ENCODE measurements at regions of chr7 and their contacts with region 1.

Region 1: GRCh38 chr7:101815835-101816493 is 1.5 kb upstream of the CUX1 start:
- DNase-seq: peak; percentile 63 to 77 (median 73)
- H3K4me3 ChIP-seq: peak overlapping the region; percentile 49 to 91 (median 73)
- H3K4me3 Mint-ChIP-seq: peak overlapping the region; percentile 74 to 83
- H3K27ac ChIP-seq: peak overlapping the region; percentile 38 to 68
- H3K27ac Mint-ChIP-seq: peak overlapping the region in 6 of 7 donors; percentile 76 to 90 (median 84)
- H3K4me1 ChIP-seq: peaks cover 31 to 51% of the 10 kb centered on the region in 2 donors
- H3K4me1 Mint-ChIP-seq: peaks cover 34% of the 10 kb centered on the region
- H3K27me3 ChIP-seq: no peaks in the 10 kb centered on the region
- H3K27me3 Mint-ChIP-seq: peaks cover 0 to 2% (median 1%) of the 10 kb centered on the region in 3 donors
- CTCF ChIP-seq: no peak

Region 2: GRCh38 chr7:101602484-101603241 is 213.3 kb before region 1 on chr7:
- intact Hi-C with region 1: loop called in 1 of 2 experiments (anchors 5 kb)
- DNase-seq: peak; percentile 51 to 66 (median 63)
- H3K4me3 ChIP-seq: no peak overlapping the region
- H3K4me3 Mint-ChIP-seq: no peak overlapping the region
- H3K27ac ChIP-seq: no peak overlapping the region
- H3K27ac Mint-ChIP-seq: no peak overlapping the region
- H3K4me1 ChIP-seq: no peaks in the 10 kb centered on the region
- H3K4me1 Mint-ChIP-seq: no peaks in the 10 kb centered on the region
- H3K27me3 ChIP-seq: no peaks in the 10 kb centered on the region
- H3K27me3 Mint-ChIP-seq: peaks cover 0 to 4% (median 0%) of the 10 kb centered on the region in 3 donors
- CTCF ChIP-seq: peak; percentile 96

Region 3: GRCh38 chr7:101688183-101688831 is 127.7 kb before region 1 on chr7:
- intact Hi-C with region 1: loop called (anchors 1 to 2 kb)
- DNase-seq: peak; percentile 74 to 84 (median 75)
- H3K4me3 ChIP-seq: peak overlapping the region in 1 of 3 experiments; percentile 59
- H3K4me3 Mint-ChIP-seq: peak overlapping the region in 1 of 2 donors; percentile 48
- H3K27ac ChIP-seq: peak overlapping the region in 1 of 2 donors; percentile 51
- H3K27ac Mint-ChIP-seq: peak overlapping the region in 2 of 7 donors; percentile 58 to 62
- H3K4me1 ChIP-seq: peaks cover 17 to 23% of the 10 kb centered on the region in 2 donors
- H3K4me1 Mint-ChIP-seq: peaks cover 23% of the 10 kb centered on the region
- H3K27me3 ChIP-seq: no peaks in the 10 kb centered on the region
- H3K27me3 Mint-ChIP-seq: peaks cover 0 to 6% (median under 1%) of the 10 kb centered on the region in 3 donors
- CTCF ChIP-seq: peak; percentile 99

Region 4: GRCh38 chr7:101743241-101743994 is 72.5 kb before region 1 on chr7:
- intact Hi-C with region 1: loop called (anchors 2 to 5 kb)
- DNase-seq: peak; percentile 37 to 41 (median 39)
- H3K4me3 ChIP-seq: peak overlapping the region; percentile 58 to 77 (median 67)
- H3K4me3 Mint-ChIP-seq: peak overlapping the region; percentile 90 to 95
- H3K27ac ChIP-seq: peak overlapping the region in 1 of 2 donors; percentile 37
- H3K27ac Mint-ChIP-seq: peak overlapping the region in 6 of 7 donors; percentile 53 to 85 (median 80)
- H3K4me1 ChIP-seq: peaks cover 56 to 72% of the 10 kb centered on the region in 2 donors
- H3K4me1 Mint-ChIP-seq: peaks cover 60% of the 10 kb centered on the region
- H3K27me3 ChIP-seq: no peaks in the 10 kb centered on the region
- H3K27me3 Mint-ChIP-seq: peaks cover 0 to 6% (median 0%) of the 10 kb centered on the region in 3 donors
- CTCF ChIP-seq: peak; percentile 75

Region 5: DNA sequence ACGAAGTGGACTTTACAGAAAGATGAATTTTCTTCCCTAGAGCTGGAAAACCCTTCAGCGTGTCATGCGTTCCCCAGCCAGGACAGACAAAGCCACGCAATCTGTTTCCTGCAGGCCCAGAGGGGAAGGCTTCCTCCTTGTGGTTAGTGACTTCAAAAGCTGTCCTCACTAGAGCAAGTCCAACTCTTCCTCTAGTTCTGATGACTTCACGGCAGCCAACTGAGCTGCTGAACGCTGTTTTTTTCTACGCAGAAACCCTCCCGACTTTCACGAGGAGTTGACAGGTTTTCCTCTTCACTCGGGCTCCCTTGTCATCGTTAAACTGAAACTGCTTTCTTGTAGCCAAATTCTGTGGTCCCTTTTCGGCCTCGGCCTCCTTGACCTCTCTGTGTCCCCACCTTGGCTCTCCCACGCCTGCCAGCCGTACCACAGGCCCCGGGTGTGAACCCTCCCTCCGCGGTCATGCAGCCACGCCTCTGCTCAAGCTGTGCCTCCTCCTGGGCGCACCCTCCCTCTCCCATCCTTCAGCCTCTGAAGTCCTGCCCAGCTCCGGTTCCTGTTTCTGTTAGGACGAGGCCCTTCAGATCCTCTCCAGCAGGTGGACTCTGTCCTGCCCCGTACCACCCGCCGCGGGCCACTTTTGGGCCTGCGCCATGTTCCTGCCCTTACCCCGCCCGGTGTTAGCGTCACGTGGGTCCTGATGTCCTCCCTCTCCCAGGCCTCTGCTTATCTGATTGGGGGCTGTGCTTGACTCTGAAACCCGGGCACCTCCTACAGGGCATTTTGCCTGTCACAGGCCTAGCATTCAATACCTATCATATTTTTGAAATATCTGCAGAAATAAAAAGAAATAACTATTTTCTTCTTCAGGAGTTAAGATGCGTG is 40.8 kb after region 1 on chr7:
- intact Hi-C with region 1: loop called (anchors 5 kb)
- DNase-seq: peak; percentile 95 to 97 (median 97)
- H3K4me3 ChIP-seq: peak overlapping the region; percentile 31 to 76 (median 48)
- H3K4me3 Mint-ChIP-seq: peak overlapping the region; percentile 80 to 85
- H3K27ac ChIP-seq: peak overlapping the region; percentile 96 to 98
- H3K27ac Mint-ChIP-seq: peak overlapping the region; percentile 99 to 100 (median 100)
- H3K4me1 ChIP-seq: peaks cover 64 to 67% of the 10 kb centered on the region in 2 donors
- H3K4me1 Mint-ChIP-seq: peaks cover 76% of the 10 kb centered on the region
- H3K27me3 ChIP-seq: no peaks in the 10 kb centered on the region
- H3K27me3 Mint-ChIP-seq: peaks cover 0 to 2% (median 1%) of the 10 kb centered on the region in 3 donors
- CTCF ChIP-seq: peak; percentile 76

Region 6: GRCh38 chr7:101882595-101883564 is 66.9 kb after region 1 on chr7:
- intact Hi-C with region 1: loop called in 1 of 2 experiments (anchors 2 kb)
- DNase-seq: peak; percentile 88 to 98 (median 93)
- H3K4me3 ChIP-seq: no peak overlapping the region
- H3K4me3 Mint-ChIP-seq: peak overlapping the region in 1 of 2 donors; percentile 26
- H3K27ac ChIP-seq: peak overlapping the region; percentile 81 to 89
- H3K27ac Mint-ChIP-seq: peak overlapping the region; percentile 93 to 98 (median 97)
- H3K4me1 ChIP-seq: peaks cover 28 to 47% of the 10 kb centered on the region in 2 donors
- H3K4me1 Mint-ChIP-seq: peaks cover 60% of the 10 kb centered on the region
- H3K27me3 ChIP-seq: no peaks in the 10 kb centered on the region
- H3K27me3 Mint-ChIP-seq: peaks cover 0 to 2% (median 2%) of the 10 kb centered on the region in 3 donors
- CTCF ChIP-seq: no peak

Measured in CD14-positive monocyte (primary cell).